CD8-positive, alpha-beta memory T cell (primary cell): ENCODE measurements at regions of chr19 and their contacts with region 1.

Region 1: DNA sequence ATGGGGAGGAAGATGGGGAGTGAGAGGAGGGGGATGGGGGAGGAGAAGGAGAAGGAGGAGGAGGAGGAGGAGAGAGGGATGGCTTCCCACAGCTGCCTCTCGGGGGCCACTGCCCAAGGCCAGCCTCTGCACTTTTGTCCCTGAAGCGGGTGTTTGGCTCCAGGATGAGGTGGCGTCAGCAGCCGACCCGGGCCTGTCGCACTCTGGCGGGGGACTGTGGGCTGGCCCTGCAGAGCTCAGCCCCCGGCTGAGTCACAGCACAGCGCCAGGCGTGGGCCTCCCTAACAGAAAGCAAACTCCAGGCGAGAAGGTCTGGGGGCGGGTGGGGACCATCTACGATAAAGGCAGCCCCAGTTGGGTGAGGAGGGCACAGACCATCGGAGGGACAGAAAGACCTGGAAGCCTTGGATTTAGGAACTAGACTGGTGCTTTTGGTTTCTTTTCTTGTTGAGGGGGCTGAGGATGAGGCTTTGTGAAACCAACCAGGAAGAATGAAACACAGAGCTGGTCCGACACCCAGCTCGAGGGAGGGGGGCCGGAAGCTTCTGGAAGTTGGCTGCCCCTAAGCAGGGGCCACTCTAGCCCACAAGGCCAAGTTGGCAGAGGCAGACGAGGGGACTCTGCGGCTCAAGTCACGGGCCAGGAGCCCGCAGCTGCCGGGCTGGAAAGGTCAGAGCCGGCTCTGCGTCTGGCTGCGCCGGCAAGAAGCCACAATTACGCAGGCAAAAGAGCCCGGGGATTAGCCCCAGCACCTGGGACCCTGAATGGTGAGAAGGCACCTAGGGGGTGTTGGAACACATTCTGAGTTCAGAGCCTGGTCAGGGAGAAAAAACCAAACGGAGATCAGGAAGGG is 18.2 kb downstream of the LSM4 start:
- DNase-seq: peak; percentile 74 to 93 (median 78)
- H3K4me3 ChIP-seq: peak overlapping the region; percentile 81
- H3K4me3 Mint-ChIP-seq: peak overlapping the region; percentile 89 to 96 (median 92)
- H3K27ac ChIP-seq: peak overlapping the region; percentile 94
- H3K27ac Mint-ChIP-seq: peak overlapping the region; percentile 94 to 99 (median 99)
- H3K4me1 ChIP-seq: peaks cover 52% of the 10 kb centered on the region
- H3K4me1 Mint-ChIP-seq: peaks cover 36 to 55% (median 40%) of the 10 kb centered on the region in 3 donors
- H3K27me3 ChIP-seq: no peaks in the 10 kb centered on the region
- H3K27me3 Mint-ChIP-seq: peaks cover 0 to 1% of the 10 kb centered on the region in 2 donors

Region 2: DNA sequence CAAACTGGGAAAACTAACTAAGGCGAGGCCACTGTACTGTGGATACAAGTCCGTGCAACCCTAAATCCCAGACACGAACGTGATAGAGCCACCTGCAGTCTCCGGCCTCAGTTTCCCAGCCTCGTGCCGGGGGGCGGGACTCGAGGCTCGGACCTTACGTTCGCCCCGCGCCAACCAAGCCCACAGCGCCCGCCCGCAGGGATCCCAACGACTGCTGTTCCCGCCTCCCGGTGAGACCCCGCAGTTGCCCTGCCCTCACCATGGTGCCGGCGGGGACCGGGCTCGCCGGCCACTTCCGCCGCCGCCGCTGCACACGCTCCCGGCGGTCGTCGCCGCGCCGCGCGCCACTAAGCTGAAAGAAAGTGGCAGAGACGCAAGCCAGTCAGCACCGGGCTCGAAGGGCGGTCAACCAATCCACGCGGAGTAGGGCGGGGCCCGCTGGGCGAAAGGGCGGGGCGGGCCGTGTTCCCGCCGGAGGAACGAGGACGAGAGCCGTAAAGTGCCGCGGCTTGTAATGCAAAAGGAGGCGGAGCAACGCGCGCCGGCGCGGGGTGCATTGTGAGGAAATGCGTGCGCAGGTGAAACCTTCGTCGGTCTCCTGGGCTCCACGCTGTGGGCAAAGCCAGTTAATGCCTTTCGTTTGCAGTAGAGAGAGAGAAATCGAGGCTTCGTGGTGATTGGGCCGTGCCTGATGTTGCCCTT is 18.2 kb after region 1 on chr19 and contains the start of gene LSM4:
- CTCF ChIA-PET with region 1: interaction called, 27 read pairs
- POLR2A ChIA-PET with region 1: interaction called, 29 read pairs
- DNase-seq: peak; percentile 99 to 100 (median 99)
- H3K4me3 ChIP-seq: peak within 1 kb of the TSS; percentile 88
- H3K4me3 Mint-ChIP-seq: peak within 1 kb of the TSS; percentile 78 to 91 (median 83)
- H3K27ac ChIP-seq: peak within 1 kb of the TSS; percentile 91
- H3K27ac Mint-ChIP-seq: peak within 1 kb of the TSS; percentile 89 to 98 (median 98)
- H3K4me1 ChIP-seq: peaks cover 57% of the 10 kb centered on the region
- H3K4me1 Mint-ChIP-seq: peaks cover 45 to 58% (median 53%) of the 10 kb centered on the region in 3 donors
- H3K27me3 ChIP-seq: no peaks in the 10 kb centered on the region
- H3K27me3 Mint-ChIP-seq: no peaks in the 10 kb centered on the region
- total RNA-seq, gene LSM4: 351 to 373 TPM